ENCODE measurements at regions of chr4 and their contacts with region 1.

Region 1: GRCh38 chr4:84394386-84394785 is 104.7 kb downstream of the NKX6-1 start:
- DNase-seq: no peak
- ATAC-seq: no peak
- H3K4me3 ChIP-seq: no peak overlapping the region
- H3K27ac ChIP-seq: no peak overlapping the region
- H3K4me1 ChIP-seq: no peaks in the 10 kb centered on the region
- H3K27me3 ChIP-seq: no peaks in the 10 kb centered on the region
- CTCF ChIP-seq: no peak

Region 2: GRCh38 chr4:84070289-84070688 is 324.1 kb before region 1 on chr4:
- CTCF ChIA-PET with region 1: no interaction called
- POLR2A ChIA-PET with region 1: no interaction called
- intact Hi-C with region 1: loop called (anchors 5 kb)
- DNase-seq: no peak
- ATAC-seq: no peak
- H3K4me3 ChIP-seq: no peak overlapping the region
- H3K27ac ChIP-seq: no peak overlapping the region
- H3K4me1 ChIP-seq: no peaks in the 10 kb centered on the region
- H3K27me3 ChIP-seq: peaks cover 40% of the 10 kb centered on the region
- CTCF ChIP-seq: no peak

Region 3: DNA sequence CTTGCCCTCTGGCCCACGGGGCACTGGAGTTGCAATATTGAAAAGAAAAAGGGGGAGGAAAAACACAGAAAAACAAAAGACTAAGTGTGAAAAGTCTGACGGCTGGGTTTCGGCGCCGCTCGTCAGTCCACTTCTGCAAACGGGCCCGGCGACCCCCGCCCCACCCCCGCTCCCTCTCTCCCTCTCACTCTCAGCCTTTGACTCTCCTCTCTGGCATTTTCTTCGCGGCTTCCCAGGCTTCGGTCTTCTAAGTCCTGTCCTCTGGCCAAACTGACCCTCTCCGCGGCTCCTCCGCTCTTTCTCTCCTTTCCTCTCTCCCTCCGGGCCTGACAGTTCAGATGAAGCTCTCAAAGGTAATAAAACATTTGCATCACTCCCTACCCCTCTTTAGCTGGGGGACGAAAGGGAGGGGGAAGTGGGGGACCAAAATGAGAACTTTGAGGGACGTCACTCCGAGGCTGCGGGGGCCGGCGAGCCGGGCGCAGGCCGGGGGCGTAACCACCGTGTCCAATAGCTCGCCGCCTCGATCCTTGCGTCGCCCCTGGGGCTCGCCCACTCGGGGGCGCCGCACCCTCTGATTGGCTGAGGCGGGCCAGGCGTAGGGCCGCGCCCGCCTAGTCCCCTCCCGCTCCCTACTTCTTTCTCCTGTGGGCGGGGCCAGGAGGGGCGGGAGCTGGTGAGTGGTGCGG is 104.7 kb after region 1 on chr4 and contains the start of gene NKX6-1:
- CTCF ChIA-PET with region 1: no interaction called
- POLR2A ChIA-PET with region 1: no interaction called
- intact Hi-C with region 1: no loop called
- DNase-seq: peak; percentile 91
- ATAC-seq: peak; percentile 95
- H3K4me3 ChIP-seq: peak within 1 kb of the TSS; percentile 90
- H3K27ac ChIP-seq: no peak within 1 kb of the TSS
- H3K4me1 ChIP-seq: no peaks in the 10 kb centered on the region
- H3K27me3 ChIP-seq: no peaks in the 10 kb centered on the region
- CTCF ChIP-seq: no peak
- total RNA-seq, gene NKX6-1: 0.52 and 0.62 TPM in 2 replicates